Naive thymus-derived CD4-positive, alpha-beta T cell (primary cell): ENCODE measurements at regions of chr2 and their contacts with region 1.

Region 1: DNA sequence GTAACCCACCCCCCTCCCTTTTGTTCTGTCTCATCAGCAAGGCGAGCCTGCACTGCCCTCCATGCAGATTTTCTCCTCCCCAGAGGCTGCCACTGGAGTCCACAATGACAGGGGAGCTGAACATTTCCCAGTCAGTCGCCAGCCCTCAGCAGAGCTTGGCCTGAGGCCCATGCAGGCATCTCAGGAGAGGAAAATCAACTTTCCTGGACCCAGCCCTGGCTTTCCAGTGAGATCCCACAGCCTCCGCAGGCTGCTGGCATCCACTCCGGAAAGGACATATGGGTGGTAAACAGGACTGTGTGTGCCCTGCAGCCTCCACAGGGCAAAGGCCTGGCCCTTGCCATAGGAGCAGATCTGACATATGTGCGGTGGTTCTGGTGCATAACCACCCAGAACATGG is 253.8 kb downstream of the TNS1 start:
- DNase-seq: no peak
- ATAC-seq: no peak
- H3K4me3 ChIP-seq: no peak overlapping the region
- H3K4me3 Mint-ChIP-seq: no peak overlapping the region
- H3K27ac ChIP-seq: no peak overlapping the region
- H3K27ac Mint-ChIP-seq: peak overlapping the region in 1 of 9 donors; percentile 13
- H3K4me1 ChIP-seq: no peaks in the 10 kb centered on the region
- H3K4me1 Mint-ChIP-seq: peaks cover 0 to 7% (median 5%) of the 10 kb centered on the region in 7 donors
- H3K27me3 ChIP-seq: no peaks in the 10 kb centered on the region
- H3K27me3 Mint-ChIP-seq: no peaks in the 10 kb centered on the region

Region 2: DNA sequence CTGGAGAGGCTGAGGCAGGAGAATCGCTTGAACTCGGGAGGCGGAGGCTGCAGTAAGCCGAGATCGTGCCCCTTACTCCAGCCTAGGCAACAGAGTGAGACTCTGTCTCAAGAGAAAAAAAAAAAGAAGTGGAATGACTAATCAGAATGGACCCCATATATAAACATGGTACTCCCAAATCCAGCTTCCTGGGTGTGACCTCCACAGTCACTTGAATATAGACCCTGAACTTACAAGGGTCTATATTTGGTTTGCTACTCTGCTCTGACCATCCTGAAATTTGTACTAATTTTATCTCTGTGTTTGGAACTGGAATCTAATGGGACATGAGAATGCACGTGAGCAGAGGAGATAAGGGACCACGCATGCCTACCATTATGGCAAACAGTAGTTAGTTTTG is 21.2 kb before region 1 on chr2:
- CTCF ChIA-PET with region 1: interaction called, 11 read pairs
- POLR2A ChIA-PET with region 1: no interaction called
- intact Hi-C with region 1: no loop called
- DNase-seq: no peak
- ATAC-seq: no peak
- H3K4me3 ChIP-seq: no peak overlapping the region
- H3K4me3 Mint-ChIP-seq: no peak overlapping the region
- H3K27ac ChIP-seq: no peak overlapping the region
- H3K27ac Mint-ChIP-seq: no peak overlapping the region
- H3K4me1 ChIP-seq: no peaks in the 10 kb centered on the region
- H3K4me1 Mint-ChIP-seq: peaks cover 0 to 2% (median 0%) of the 10 kb centered on the region in 7 donors
- H3K27me3 ChIP-seq: no peaks in the 10 kb centered on the region
- H3K27me3 Mint-ChIP-seq: no peaks in the 10 kb centered on the region